GM12878 (cell line): ENCODE measurements at regions of chr2 and their contacts with region 1.

Region 1: GRCh38 chr2:177148477-177149154 is 64.0 kb upstream of the HNRNPA3 start:
- DNase-seq: peak; percentile 45
- ATAC-seq: peak; percentile 95
- H3K4me3 ChIP-seq: peak overlapping the region; percentile 69
- H3K27ac ChIP-seq: no peak overlapping the region
- H3K4me1 ChIP-seq: no peaks in the 10 kb centered on the region
- H3K27me3 ChIP-seq: peaks cover 0 to 2% of the 10 kb centered on the region in 2 experiments; a peak in 1 of 4 replicates
- CTCF ChIP-seq: peak; percentile 87 to 93 (median 92)
- EP300 ChIP-seq: 0 out of 4 replicates have a peak, but pooled peaks of 1 of the 2 experiments have one; percentile 13
- POLR2A ChIP-seq: no peak
- RAD21 ChIP-seq: peak; percentile 67

Region 2: GRCh38 chr2:176140513-176141317 is 1007.9 kb before region 1 on chr2:
- CTCF ChIA-PET with region 1: interaction called, 35 read pairs
- POLR2A ChIA-PET with region 1: no interaction called
- RAD21 ChIA-PET with region 1: interaction called, 11 read pairs
- SMC1A ChIA-PET with region 1: interaction called, 12 read pairs
- in situ Hi-C with region 1: no loop called
- intact Hi-C with region 1: loop called (anchors 5 kb)
- DNase-seq: peak; percentile 24
- ATAC-seq: peak; percentile 99
- H3K4me3 ChIP-seq: peak overlapping the region; percentile 37; the same call in 1 of the 2 replicates
- H3K27ac ChIP-seq: no peak overlapping the region
- H3K4me1 ChIP-seq: no peaks in the 10 kb centered on the region
- H3K27me3 ChIP-seq: peaks cover 0 to 11% of the 10 kb centered on the region in 2 experiments
- CTCF ChIP-seq: peak; percentile 75 to 93 (median 92)
- EP300 ChIP-seq: no peak
- POLR2A ChIP-seq: no peak; the same call in 1 of the 2 replicates
- RAD21 ChIP-seq: peak; percentile 95

Region 3: DNA sequence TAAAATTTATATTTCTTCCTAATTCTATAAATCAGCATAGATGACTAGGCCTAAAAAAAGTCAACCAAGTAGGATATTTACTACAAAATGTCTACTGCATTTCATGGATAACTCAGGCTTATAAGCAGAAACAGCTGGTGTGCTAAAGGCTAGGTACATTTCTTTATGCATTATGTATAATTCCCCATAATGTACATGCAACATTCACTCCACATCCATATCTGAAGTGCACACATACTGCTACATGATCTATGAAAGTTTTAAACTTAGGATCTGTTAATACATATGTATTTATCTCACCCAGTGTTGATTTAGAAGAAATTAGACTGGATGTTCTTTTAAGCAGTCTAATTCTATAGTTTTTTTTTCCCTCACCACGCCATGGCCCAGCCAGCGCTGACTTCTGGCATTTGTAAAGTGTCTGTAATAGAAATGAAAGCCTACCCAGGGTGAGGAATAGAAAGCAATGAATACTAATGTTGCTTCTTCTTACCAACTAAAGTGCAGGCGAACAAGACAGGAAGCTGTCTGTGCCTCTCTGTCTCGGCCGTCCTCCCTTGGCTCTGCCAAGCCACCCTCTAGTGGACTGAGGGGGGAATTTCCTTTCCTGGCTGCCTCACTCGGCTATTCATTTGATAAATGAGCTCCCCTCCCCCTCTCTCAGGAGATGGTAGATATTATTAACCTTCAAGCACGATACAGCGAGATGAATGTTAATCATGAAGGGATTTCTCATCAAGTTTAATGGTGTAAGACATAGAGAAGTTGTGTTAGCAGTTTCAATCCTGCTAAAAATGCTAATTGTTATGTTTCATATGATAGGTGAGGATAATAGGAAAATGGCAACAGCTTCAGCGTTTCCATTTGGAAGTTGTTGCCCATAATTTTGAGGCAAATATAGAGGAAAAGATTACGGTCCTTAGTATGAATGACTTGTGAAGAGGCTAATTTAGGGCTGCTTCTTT is 494.9 kb before region 1 on chr2:
- CTCF ChIA-PET with region 1: interaction called, 127 read pairs
- POLR2A ChIA-PET with region 1: no interaction called
- RAD21 ChIA-PET with region 1: interaction called, 39 read pairs
- SMC1A ChIA-PET with region 1: interaction called, 85 read pairs
- in situ Hi-C with region 1: no loop called
- intact Hi-C with region 1: loop called (anchors 2 kb)
- DNase-seq: no peak
- ATAC-seq: peak; percentile 97
- H3K4me3 ChIP-seq: no peak overlapping the region
- H3K27ac ChIP-seq: no peak overlapping the region
- H3K4me1 ChIP-seq: no peaks in the 10 kb centered on the region
- H3K27me3 ChIP-seq: no peaks in the 10 kb centered on the region; a peak in 1 of 4 replicates
- CTCF ChIP-seq: peak; percentile 60 to 76 (median 62)
- EP300 ChIP-seq: no peak
- POLR2A ChIP-seq: no peak
- RAD21 ChIP-seq: peak; percentile 43

Region 4: GRCh38 chr2:176814306-176815052 is 334.1 kb before region 1 on chr2:
- CTCF ChIA-PET with region 1: interaction called, 250 read pairs
- POLR2A ChIA-PET with region 1: interaction called, 3 read pairs
- RAD21 ChIA-PET with region 1: interaction called, 29 read pairs
- SMC1A ChIA-PET with region 1: interaction called, 49 read pairs
- in situ Hi-C with region 1: no loop called
- intact Hi-C with region 1: loop called (anchors 1 kb)
- DNase-seq: peak; percentile 8
- ATAC-seq: peak; percentile 80
- H3K4me3 ChIP-seq: no peak overlapping the region
- H3K27ac ChIP-seq: no peak overlapping the region
- H3K4me1 ChIP-seq: no peaks in the 10 kb centered on the region
- H3K27me3 ChIP-seq: no peaks in the 10 kb centered on the region
- CTCF ChIP-seq: peak; percentile 42 to 54 (median 48); a peak in 5 of 6 replicates
- EP300 ChIP-seq: no peak
- POLR2A ChIP-seq: no peak
- RAD21 ChIP-seq: peak; percentile 79

Region 5: DNA sequence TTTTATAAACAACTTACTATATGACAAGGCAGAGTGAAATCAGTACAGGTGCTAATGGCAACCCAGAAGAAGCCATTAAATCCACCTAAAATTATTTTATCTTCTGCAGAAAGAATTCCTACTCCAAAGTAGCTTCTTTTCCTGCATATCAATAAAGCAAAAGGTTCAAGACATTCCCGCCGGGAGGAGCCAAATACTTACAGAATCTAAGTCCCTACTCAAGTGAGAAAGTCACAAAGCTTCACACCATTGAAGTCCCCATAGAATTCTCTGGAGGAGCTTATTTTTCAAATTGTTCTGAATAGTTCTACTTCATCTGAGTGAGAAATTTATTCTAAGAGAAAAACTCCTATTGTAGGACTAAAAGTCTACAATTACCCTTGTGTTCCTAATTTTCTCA is 169.7 kb before region 1 on chr2:
- CTCF ChIA-PET with region 1: interaction called, 64 read pairs
- POLR2A ChIA-PET with region 1: no interaction called
- RAD21 ChIA-PET with region 1: interaction called, 24 read pairs
- SMC1A ChIA-PET with region 1: interaction called, 46 read pairs
- in situ Hi-C with region 1: no loop called
- intact Hi-C with region 1: loop called (anchors 5 kb)
- DNase-seq: no peak
- ATAC-seq: no peak
- H3K4me3 ChIP-seq: no peak overlapping the region
- H3K27ac ChIP-seq: no peak overlapping the region
- H3K4me1 ChIP-seq: no peaks in the 10 kb centered on the region
- H3K27me3 ChIP-seq: no peaks in the 10 kb centered on the region
- CTCF ChIP-seq: no peak; a peak in 1 of 6 replicates
- EP300 ChIP-seq: no peak
- POLR2A ChIP-seq: no peak
- RAD21 ChIP-seq: no peak

Region 6: GRCh38 chr2:177225965-177226360 is 77.3 kb after region 1 on chr2:
- CTCF ChIA-PET with region 1: no interaction called
- POLR2A ChIA-PET with region 1: no interaction called
- RAD21 ChIA-PET with region 1: no interaction called
- SMC1A ChIA-PET with region 1: no interaction called
- in situ Hi-C with region 1: no loop called
- intact Hi-C with region 1: no loop called
- DNase-seq: no peak
- ATAC-seq: no peak
- H3K4me3 ChIP-seq: no peak overlapping the region
- H3K27ac ChIP-seq: no peak overlapping the region
- H3K4me1 ChIP-seq: no peaks in the 10 kb centered on the region
- H3K27me3 ChIP-seq: no peaks in the 10 kb centered on the region
- CTCF ChIP-seq: no peak
- EP300 ChIP-seq: no peak
- POLR2A ChIP-seq: no peak
- RAD21 ChIP-seq: no peak

Region 7: GRCh38 chr2:177263451-177264208 is 115.0 kb after region 1 on chr2:
- CTCF ChIA-PET with region 1: interaction called, 13 read pairs
- POLR2A ChIA-PET with region 1: interaction called, 4 read pairs
- RAD21 ChIA-PET with region 1: interaction called, 6 read pairs
- SMC1A ChIA-PET with region 1: interaction called, 5 read pairs
- in situ Hi-C with region 1: no loop called
- intact Hi-C with region 1: no loop called
- DNase-seq: peak; percentile 71
- ATAC-seq: peak; percentile 74
- H3K4me3 ChIP-seq: peak overlapping the region; percentile 72
- H3K27ac ChIP-seq: peak overlapping the region; percentile 99
- H3K4me1 ChIP-seq: peaks cover 12% of the 10 kb centered on the region
- H3K27me3 ChIP-seq: no peaks in the 10 kb centered on the region
- CTCF ChIP-seq: peak; percentile 85 to 96 (median 86); a peak in 5 of 6 replicates
- EP300 ChIP-seq: peak; percentile 90 to 93
- POLR2A ChIP-seq: peak; percentile 81
- RAD21 ChIP-seq: peak; percentile 62